ENCODE measurements at regions of chr18 and their contacts with region 1.

Region 1: DNA sequence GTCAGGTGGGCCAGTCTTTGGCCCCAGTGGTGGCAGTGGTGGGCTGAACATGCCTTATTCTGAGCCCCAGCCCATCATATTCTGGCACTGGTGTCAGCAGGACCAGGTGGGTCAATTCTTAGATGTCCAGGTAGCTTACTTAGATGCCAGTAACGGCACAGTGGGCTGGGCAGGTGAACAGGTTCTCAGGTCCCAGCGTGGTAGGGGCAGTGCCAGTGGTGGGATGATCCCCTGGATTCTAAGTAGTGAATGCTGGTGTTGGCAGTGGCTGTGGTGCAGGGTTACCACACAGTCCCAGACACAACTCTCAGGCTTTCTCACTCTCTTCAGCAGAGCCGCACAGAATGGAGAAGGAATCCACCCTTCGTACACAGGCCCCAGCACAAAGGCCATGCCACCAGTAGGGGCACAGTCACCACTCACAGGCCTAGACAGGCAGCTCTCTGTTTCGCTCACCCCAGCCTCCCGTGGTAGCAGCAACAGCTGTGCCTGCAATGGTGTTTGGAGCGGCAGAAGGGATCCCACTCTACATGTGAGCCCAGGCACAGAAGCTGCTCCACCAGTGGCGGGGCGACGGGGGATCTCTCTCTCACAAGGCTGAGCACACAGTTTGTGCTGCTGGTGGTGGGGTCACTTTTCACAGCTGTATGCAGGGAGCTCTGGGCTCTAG is 97.3 kb downstream of the ANKRD12 start:
- DNase-seq: no peak
- H3K4me3 ChIP-seq: no peak overlapping the region
- H3K27ac ChIP-seq: no peak overlapping the region
- H3K4me1 ChIP-seq: no peaks in the 10 kb centered on the region
- H3K27me3 ChIP-seq: no peaks in the 10 kb centered on the region
- CTCF ChIP-seq: no peak

Region 2: DNA sequence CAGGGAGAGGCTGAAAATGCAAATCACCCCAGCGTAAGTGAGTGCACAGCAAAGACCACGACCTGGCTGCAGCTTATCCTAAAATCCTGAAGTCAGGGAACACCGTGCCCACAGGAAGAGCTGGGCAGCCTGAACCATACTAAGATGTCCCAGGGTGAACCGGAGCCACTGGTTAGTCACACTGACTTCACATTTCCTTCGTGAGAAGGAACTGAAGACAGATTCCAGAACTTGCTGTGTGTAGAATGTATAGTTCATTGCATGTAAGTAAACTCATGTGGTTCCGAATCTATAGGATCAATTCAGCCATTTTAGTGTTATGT is 216.0 kb before region 1 on chr18:
- CTCF ChIA-PET with region 1: no interaction called
- POLR2A ChIA-PET with region 1: no interaction called
- intact Hi-C with region 1: no loop called
- DNase-seq: peak in 1 of 2 experiments; percentile 72
- H3K4me3 ChIP-seq: peak overlapping the region; percentile 49; the same call in 1 of the 2 replicates
- H3K27ac ChIP-seq: peak overlapping the region; percentile 92
- H3K4me1 ChIP-seq: peaks cover 35% of the 10 kb centered on the region
- H3K27me3 ChIP-seq: no peaks in the 10 kb centered on the region
- CTCF ChIP-seq: no peak

Region 3: GRCh38 chr18:9184998-9185613 is 48.8 kb before region 1 on chr18:
- CTCF ChIA-PET with region 1: no interaction called
- POLR2A ChIA-PET with region 1: interaction called, 15 read pairs
- intact Hi-C with region 1: no loop called
- DNase-seq: no peak
- H3K4me3 ChIP-seq: no peak overlapping the region
- H3K27ac ChIP-seq: no peak overlapping the region
- H3K4me1 ChIP-seq: no peaks in the 10 kb centered on the region
- H3K27me3 ChIP-seq: no peaks in the 10 kb centered on the region
- CTCF ChIP-seq: no peak

Region 4: GRCh38 chr18:9392726-9393125 is 158.8 kb after region 1 on chr18:
- CTCF ChIA-PET with region 1: no interaction called
- POLR2A ChIA-PET with region 1: no interaction called
- intact Hi-C with region 1: no loop called
- DNase-seq: no peak
- H3K4me3 ChIP-seq: no peak overlapping the region
- H3K27ac ChIP-seq: no peak overlapping the region
- H3K4me1 ChIP-seq: no peaks in the 10 kb centered on the region
- H3K27me3 ChIP-seq: no peaks in the 10 kb centered on the region
- CTCF ChIP-seq: 0 out of 2 replicates have a peak, but pooled peaks have one; percentile 14